ENCODE measurements at regions of chr9 and their contacts with region 1.

Region 1: GRCh38 chr9:121213136-121213806 is 11.6 kb upstream of the RAB14 start:
- DNase-seq: peak; percentile 79
- H3K4me3 Mint-ChIP-seq: no peak overlapping the region
- H3K27ac Mint-ChIP-seq: no peak overlapping the region
- H3K4me1 Mint-ChIP-seq: peaks cover 14% of the 10 kb centered on the region
- H3K27me3 Mint-ChIP-seq: no peaks in the 10 kb centered on the region

Region 2: GRCh38 chr9:121232247-121232646 is 19.0 kb after region 1 on chr9:
- CTCF ChIA-PET with region 1: interaction called, 13 read pairs
- DNase-seq: no peak
- H3K4me3 Mint-ChIP-seq: no peak overlapping the region
- H3K27ac Mint-ChIP-seq: no peak overlapping the region
- H3K4me1 Mint-ChIP-seq: no peaks in the 10 kb centered on the region
- H3K27me3 Mint-ChIP-seq: no peaks in the 10 kb centered on the region

Region 3: DNA sequence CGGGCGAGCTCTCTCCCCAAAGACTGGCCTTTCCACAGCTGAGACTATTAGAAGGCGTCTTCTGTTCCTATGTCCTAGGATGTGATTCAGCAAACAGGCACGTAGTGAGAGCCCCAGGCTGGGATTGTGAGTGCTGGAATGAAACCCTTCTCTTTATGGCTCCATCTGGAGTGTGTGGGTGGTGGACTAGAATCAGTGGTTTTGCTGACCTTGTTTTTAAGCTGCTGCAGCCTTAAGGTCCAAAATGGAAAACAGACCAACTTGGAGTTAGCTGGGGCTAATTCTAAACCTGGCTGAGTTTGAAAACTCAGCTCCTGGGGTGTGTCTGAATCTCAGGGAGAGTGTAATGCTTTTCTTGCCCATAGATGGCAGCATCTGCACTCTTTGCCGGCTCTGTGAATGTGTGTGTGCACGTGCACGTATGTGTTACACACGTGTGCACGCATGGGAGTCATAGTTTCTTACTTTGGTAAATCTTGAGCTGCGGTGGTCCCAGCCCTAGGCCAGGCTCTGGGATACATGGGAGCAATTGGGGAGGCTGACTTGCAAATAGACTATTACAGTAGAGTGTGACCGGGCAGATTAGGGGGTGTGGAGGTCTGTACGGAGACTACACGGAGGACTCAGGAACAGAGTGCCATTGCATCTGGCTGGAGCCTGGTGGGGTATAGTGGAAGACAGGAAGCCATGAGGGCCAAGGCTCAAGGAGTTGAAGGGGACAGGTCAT is 65.4 kb after region 1 on chr9:
- CTCF ChIA-PET with region 1: interaction called, 10 read pairs
- DNase-seq: peak; percentile 55
- H3K4me3 Mint-ChIP-seq: no peak overlapping the region
- H3K27ac Mint-ChIP-seq: no peak overlapping the region
- H3K4me1 Mint-ChIP-seq: peaks cover 5% of the 10 kb centered on the region
- H3K27me3 Mint-ChIP-seq: peaks cover 20% of the 10 kb centered on the region

Measured in activated naive CD4-positive, alpha-beta T cell treated with anti-CD3 and anti-CD28 coated beads, Interleukin-2, amount 10 ng/mL, durations not matched to agents 7 days and 5 days (primary cell).